ENCODE measurements at regions of chr7 and their contacts with region 1.

Region 1: GRCh38 chr7:22001345-22002004 is 55.8 kb upstream of the CDCA7L start:
- DNase-seq: peak; percentile 77
- H3K4me3 ChIP-seq: no peak overlapping the region
- H3K27ac ChIP-seq: no peak overlapping the region
- H3K4me1 ChIP-seq: peaks cover 4% of the 10 kb centered on the region
- H3K27me3 ChIP-seq: peaks cover 14% of the 10 kb centered on the region
- CTCF ChIP-seq: peak; percentile 85

Region 2: DNA sequence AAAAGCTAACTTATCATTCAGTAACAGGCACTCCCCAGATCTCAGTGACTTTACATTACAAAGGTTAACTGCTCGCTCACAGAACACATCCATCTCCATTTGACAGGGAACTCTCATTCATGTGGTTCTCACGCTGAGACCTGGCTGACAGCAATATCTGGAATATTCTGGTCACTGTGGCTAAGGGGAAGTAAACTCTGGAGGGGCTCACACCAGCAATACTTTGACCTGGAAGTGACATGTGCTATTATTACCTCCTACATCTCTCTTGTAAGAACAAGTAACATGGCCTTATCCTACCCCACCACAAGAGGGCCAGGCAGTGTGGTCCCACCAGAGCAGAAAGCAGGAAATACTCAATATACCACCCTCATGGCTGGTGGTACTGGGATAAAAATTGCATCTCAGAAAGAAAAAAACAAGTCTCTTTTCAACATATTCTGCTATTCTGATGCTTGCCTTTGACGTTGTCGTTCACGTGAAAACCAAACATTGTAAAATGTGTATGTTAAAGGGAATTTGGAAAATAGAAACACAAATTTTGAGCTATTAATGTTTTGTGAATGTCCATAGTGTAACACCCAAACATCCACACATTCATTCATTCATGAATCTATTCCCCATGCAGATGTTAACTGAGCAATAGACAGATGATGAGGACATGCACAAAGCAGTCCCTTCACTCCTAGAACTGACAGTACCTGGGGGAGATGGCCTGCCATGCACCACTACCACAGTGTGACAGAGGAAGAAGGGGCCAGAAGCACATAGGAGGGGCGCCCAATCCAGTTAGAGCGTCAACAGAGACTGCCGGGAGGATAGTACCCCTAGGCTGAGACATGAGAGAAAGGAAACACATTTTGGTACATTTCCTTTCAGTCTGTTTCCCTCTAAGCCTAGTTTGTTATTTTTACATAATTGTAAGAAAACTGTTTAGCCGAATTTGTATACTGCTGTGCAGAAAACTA is 739.6 kb before region 1 on chr7:
- CTCF ChIA-PET with region 1: no interaction called
- POLR2A ChIA-PET with region 1: no interaction called
- intact Hi-C with region 1: loop called (anchors 2 kb)
- DNase-seq: peak; percentile 58
- H3K4me3 ChIP-seq: no peak overlapping the region
- H3K27ac ChIP-seq: no peak overlapping the region
- H3K4me1 ChIP-seq: no peaks in the 10 kb centered on the region
- H3K27me3 ChIP-seq: peaks cover 56% of the 10 kb centered on the region
- CTCF ChIP-seq: peak; percentile 66

Region 3: DNA sequence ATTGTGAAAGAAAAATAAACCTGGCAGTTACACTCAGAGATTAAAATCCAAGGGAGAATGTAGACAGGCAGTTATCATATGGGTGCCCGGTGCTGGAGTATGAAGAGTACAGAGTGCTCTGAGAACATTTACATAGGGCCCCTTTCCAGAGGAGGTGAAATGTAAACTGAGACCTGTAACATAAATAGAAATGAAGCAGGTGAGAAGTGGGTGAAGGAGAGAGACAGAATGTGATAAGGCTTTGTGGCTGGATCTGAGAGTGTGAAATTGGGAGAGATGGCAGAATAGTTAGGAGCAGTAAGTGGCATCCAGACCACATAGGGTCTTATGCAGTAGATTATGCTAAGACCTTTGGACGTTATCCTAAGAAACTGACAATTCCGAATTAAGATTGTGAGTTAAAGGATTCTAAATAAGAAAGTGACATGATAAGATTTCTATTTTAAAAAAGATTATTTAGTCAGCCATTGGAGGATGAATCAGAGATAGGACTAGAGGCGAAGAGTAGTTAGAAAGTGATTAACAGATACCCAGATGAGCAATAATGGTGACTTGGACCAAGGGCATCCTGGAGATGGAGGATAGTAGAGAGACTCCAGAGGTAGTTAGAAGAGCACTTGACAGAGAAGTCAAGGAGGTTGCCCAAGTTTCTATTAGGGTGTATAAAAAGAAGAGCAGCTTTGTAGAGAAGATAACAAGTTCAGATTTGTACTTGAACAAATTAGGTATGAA is 422.0 kb before region 1 on chr7:
- CTCF ChIA-PET with region 1: no interaction called
- POLR2A ChIA-PET with region 1: no interaction called
- intact Hi-C with region 1: loop called (anchors 10 kb)
- DNase-seq: no peak
- H3K4me3 ChIP-seq: no peak overlapping the region
- H3K27ac ChIP-seq: no peak overlapping the region
- H3K4me1 ChIP-seq: no peaks in the 10 kb centered on the region
- H3K27me3 ChIP-seq: peaks cover 3% of the 10 kb centered on the region
- CTCF ChIP-seq: no peak

Region 4: GRCh38 chr7:22082886-22083703 is 81.6 kb after region 1 on chr7:
- CTCF ChIA-PET with region 1: no interaction called
- POLR2A ChIA-PET with region 1: no interaction called
- intact Hi-C with region 1: loop called (anchors 5 kb)
- DNase-seq: peak; percentile 87
- H3K4me3 ChIP-seq: peak overlapping the region; percentile 61
- H3K27ac ChIP-seq: no peak overlapping the region
- H3K4me1 ChIP-seq: peaks cover 5% of the 10 kb centered on the region
- H3K27me3 ChIP-seq: peaks cover 18% of the 10 kb centered on the region
- CTCF ChIP-seq: peak; percentile 99

Measured in A673 (cell line).